Activated B cell treated with CpG ODN at 0.5 μM for 24 hours (primary cell): ENCODE measurements at regions of chr22 and their contacts with region 1.

Region 1: DNA sequence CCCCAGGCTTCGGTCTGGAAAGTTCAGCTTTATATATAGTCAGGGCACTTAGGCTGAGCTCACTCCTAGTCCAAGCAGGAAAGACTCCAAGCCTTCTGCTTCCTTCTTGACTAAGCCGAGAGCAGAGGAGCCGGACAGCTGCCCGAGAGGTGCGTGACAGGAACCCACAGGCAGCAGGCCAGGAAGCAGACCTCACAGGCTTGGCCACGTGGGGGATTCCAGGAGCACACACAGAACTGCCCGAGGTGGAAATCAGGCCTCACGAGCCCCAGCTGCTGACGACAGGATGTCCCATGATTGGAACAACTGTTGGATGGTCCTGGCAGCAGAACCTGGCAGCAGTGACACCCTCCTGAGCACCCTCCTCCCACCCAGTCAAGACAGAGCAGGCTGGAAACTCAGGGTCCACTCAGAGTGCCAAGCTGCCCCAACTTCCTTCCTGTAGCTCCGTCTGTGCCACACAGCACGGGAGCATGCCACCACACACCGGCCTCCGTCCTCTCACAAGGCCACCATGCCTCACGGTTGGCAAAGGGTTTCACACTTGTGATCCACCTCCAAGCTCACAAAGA is 5.4 kb downstream of the PLA2G6 start:
- DNase-seq: no peak
- ATAC-seq: peak; percentile 35
- H3K4me3 Mint-ChIP-seq: no peak overlapping the region
- H3K27ac Mint-ChIP-seq: peak overlapping the region; percentile 35
- H3K4me1 Mint-ChIP-seq: peaks cover 50% of the 10 kb centered on the region
- H3K27me3 Mint-ChIP-seq: no peaks in the 10 kb centered on the region
- CTCF ChIP-seq: no peak

Region 2: DNA sequence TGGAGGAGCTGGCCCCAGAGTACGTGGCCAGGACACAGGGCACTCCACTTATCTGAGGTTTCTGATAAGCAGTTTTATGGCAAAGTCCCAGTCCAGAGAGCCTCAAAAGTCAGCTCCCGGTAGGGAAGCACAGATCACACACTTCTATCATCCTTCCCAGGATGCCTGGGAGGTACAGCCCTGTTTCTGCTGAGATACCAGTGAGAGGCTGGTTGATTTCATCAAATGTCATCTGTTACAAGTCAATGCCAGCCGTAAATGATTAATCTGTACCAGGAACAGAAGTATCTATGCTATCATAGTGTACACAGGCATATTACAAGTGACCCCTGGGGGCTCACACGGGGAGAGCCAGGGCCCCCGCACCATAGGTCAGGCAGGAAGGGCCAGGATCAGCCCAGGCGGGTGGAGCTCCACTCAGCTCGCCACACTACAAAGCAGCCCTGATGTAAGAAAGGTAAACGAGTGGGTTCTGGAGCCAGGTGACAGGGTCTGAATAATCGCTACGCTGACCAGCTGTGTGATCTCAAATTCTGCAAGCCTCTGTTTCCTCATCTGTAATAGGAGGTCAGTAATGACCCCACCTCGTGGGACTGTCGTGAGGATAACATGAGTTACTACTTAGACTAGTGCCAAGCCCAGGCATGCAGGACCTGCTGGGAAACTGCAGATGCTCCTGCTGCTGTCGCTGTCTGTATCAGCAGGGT is 12.3 kb before region 1 on chr22:
- CTCF ChIA-PET with region 1: no interaction called
- POLR2A ChIA-PET with region 1: interaction called, 11 read pairs
- intact Hi-C with region 1: loop called (anchors 1 kb)
- DNase-seq: no peak
- ATAC-seq: no peak
- H3K4me3 Mint-ChIP-seq: no peak overlapping the region
- H3K27ac Mint-ChIP-seq: peak overlapping the region; percentile 79
- H3K4me1 Mint-ChIP-seq: peaks cover 40% of the 10 kb centered on the region
- H3K27me3 Mint-ChIP-seq: no peaks in the 10 kb centered on the region
- CTCF ChIP-seq: no peak

Region 3: GRCh38 chr22:38192475-38192863 is 16.2 kb after region 1 on chr22:
- CTCF ChIA-PET with region 1: no interaction called
- POLR2A ChIA-PET with region 1: no interaction called
- intact Hi-C with region 1: no loop called
- DNase-seq: no peak
- ATAC-seq: no peak
- H3K4me3 Mint-ChIP-seq: no peak overlapping the region
- H3K27ac Mint-ChIP-seq: no peak overlapping the region
- H3K4me1 Mint-ChIP-seq: peaks cover 3% of the 10 kb centered on the region
- H3K27me3 Mint-ChIP-seq: peaks cover 22% of the 10 kb centered on the region
- CTCF ChIP-seq: no peak